ENCODE measurements at regions of chr9 and their contacts with region 1.

Region 1: GRCh38 chr9:94681508-94681907 is 42.2 kb upstream of the FBP1 start:
- DNase-seq: peak; percentile 70
- CTCF ChIP-seq: peak; percentile 63

Region 2: DNA sequence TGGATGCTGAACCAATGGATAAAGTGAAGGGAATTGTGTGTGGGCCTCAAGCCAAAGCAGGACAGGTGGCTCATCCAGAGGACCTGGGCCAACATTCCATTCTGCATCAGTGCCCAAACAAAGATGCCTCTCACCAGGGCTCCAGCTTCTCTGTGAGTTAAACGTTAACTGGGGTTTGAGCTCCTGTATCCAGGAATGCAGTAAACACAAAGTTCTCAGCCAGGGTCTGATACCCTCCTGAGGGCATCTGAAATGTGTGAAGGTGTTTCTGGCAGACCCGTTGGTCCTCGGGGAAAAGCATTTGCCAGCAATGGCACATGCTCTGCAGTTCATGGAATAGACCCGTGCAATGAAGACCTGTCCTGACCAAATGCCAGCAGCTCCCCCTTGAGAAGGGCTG is 11.1 kb after region 1 on chr9:
- CTCF ChIA-PET with region 1: interaction called, 18 read pairs
- POLR2A ChIA-PET with region 1: no interaction called
- DNase-seq: no peak
- CTCF ChIP-seq: no peak

Region 3: DNA sequence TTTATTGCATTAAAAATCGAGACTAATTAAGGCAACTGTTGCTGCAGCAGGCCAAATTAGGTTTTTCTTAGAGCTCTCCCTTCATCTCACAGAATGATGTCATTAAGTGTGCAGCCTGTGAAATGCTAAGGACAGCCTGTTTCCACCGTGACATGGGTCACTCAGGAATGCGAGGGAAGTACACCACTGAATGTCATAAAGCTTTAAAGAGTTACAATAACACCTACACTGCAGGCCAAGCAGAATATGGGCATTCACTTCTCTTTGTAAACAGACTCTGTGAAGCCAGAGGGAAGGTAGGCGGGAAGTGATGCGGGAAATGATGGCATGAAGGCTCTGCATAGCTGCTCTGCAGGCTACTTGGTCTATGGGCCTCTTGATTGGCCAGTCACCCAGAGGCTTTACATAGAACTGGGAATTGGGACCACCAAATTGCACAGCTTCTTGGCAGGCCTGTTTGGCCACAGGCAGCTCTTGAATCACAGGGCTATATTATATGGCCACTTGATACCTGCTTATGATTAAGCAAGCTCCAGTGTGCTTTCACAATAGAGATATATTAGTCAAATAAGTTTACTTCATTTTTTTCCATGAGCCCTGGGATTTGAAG is 16.6 kb after region 1 on chr9:
- CTCF ChIA-PET with region 1: interaction called, 18 read pairs
- POLR2A ChIA-PET with region 1: no interaction called
- DNase-seq: no peak
- CTCF ChIP-seq: no peak

Region 4: GRCh38 chr9:94717761-94718160 is 36.3 kb after region 1 on chr9:
- CTCF ChIA-PET with region 1: interaction called, 11 read pairs
- POLR2A ChIA-PET with region 1: no interaction called
- DNase-seq: no peak
- CTCF ChIP-seq: no peak

Region 5: GRCh38 chr9:94917840-94918753 is 236.6 kb after region 1 on chr9:
- CTCF ChIA-PET with region 1: interaction called, 28 read pairs
- POLR2A ChIA-PET with region 1: no interaction called
- DNase-seq: peak; percentile 61
- CTCF ChIP-seq: no peak

Region 6: GRCh38 chr9:95167998-95168397 is 486.5 kb after region 1 on chr9:
- CTCF ChIA-PET with region 1: interaction called, 11 read pairs
- POLR2A ChIA-PET with region 1: no interaction called
- DNase-seq: no peak
- CTCF ChIP-seq: peak; percentile 51